ENCODE measurements at regions of chr4 and their contacts with region 1.

Region 1: DNA sequence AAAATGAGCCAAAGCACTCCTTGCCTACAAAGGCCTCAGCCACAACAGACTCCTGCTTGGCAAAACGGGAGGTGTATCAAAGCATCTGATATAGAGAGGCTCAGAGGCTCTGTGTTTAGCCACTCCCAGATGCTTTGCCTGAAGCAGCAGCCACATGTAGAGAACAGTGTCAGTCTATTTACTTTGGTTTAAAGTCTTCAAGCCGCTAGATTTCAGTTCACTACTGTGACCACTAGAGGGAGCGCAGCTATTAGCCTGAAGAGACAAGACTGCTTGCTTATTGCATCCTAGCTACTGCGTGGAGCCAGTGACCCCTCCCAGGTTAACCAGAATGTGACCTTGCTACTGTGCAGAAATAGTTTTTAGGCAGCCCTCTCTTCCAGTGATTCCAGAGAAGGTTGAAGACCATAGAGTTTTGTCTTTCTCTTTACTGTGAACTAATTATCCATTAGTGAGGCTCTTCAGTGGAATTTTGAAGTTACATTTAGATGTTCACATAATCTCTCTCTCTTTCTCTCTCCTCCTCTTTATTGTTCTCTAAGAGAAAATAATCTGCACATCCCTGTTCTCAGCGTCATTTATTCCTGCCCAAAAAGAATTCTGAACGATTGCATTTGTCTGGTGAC is 39.3 kb downstream of the BMP3 start:
- DNase-seq: peak; percentile 38
- H3K4me3 ChIP-seq: no peak overlapping the region
- H3K27me3 ChIP-seq: peaks cover 1% of the 10 kb centered on the region; the same call in 1 of the 2 replicates
- CTCF ChIP-seq: peak; percentile 91

Region 2: GRCh38 chr4:81084029-81084428 is 14.2 kb after region 1 on chr4:
- CTCF ChIA-PET with region 1: interaction called, 15 read pairs
- POLR2A ChIA-PET with region 1: no interaction called
- DNase-seq: no peak
- H3K4me3 ChIP-seq: no peak overlapping the region
- H3K27me3 ChIP-seq: no peaks in the 10 kb centered on the region
- CTCF ChIP-seq: peak; percentile 52

Region 3: GRCh38 chr4:81255524-81255923 is 185.7 kb after region 1 on chr4:
- CTCF ChIA-PET with region 1: interaction called, 28 read pairs
- POLR2A ChIA-PET with region 1: no interaction called
- DNase-seq: peak; percentile 50
- H3K4me3 ChIP-seq: no peak overlapping the region
- H3K27me3 ChIP-seq: no peaks in the 10 kb centered on the region
- CTCF ChIP-seq: no peak

Region 4: GRCh38 chr4:81260443-81261101 is 190.8 kb after region 1 on chr4:
- CTCF ChIA-PET with region 1: interaction called, 28 read pairs
- POLR2A ChIA-PET with region 1: no interaction called
- DNase-seq: no peak
- H3K4me3 ChIP-seq: no peak overlapping the region
- H3K27me3 ChIP-seq: no peaks in the 10 kb centered on the region
- CTCF ChIP-seq: peak; percentile 47

Region 5: DNA sequence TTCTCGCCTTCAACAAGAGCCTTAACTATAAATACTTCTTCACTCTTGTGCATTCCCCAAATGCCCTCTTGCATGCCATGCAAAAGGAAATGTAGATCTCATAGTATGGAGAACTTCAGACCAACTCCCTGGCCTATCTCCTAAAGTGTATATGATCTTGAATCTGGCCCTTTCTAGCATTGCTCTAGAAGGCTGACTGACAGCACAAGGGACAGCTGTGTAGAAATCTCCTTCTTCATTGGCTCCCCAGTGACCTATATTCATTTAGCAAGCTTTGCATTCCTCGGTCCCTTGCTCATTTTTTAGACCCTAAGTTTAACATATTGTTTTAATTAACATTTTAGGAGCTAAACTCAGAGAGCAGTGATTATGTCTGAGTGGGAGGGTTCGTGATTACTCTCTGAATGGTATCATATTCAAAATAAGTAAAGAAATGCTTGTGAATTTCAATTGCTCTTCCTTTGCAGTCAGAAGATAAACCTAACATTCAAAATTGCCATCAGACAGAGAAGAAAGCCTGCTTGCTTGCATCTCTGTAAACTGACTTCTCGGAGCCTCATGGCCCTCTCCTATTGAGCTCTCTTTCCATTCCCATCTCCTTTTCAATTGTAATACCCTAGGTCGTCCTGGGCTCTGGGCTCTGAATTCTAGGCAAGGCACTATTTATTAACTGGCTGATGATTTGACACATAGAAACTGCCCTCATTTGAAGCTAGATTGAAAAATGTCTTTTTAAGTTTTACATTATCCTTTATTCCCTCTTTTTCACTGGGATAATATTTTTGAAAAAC is 265.5 kb after region 1 on chr4:
- CTCF ChIA-PET with region 1: interaction called, 10 read pairs
- POLR2A ChIA-PET with region 1: no interaction called
- DNase-seq: peak; percentile 33
- H3K4me3 ChIP-seq: no peak overlapping the region
- H3K27me3 ChIP-seq: no peaks in the 10 kb centered on the region; the same call in 1 of the 2 replicates
- CTCF ChIP-seq: no peak

Region 6: DNA sequence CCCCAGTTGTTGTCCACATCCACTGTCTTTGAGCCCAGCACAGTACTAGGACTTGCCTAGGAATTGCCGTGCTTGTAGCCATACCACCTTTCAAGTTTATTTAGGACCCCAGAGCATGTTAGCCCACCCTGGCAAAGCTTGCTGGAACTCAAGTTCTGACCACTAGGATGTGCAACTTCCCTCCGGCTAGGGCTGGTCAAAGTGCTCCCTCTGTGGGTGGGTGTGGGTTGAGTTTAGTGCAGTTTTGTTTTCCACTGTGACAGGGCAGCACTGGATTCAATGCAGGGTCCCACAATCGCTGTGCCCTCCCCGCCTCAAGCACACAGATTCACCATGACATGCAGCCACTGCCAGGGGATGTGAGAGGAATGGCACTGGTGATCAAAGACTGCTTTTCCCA is 305.9 kb after region 1 on chr4:
- CTCF ChIA-PET with region 1: interaction called, 12 read pairs
- POLR2A ChIA-PET with region 1: no interaction called
- DNase-seq: no peak
- H3K4me3 ChIP-seq: no peak overlapping the region
- H3K27me3 ChIP-seq: no peaks in the 10 kb centered on the region
- CTCF ChIP-seq: no peak